MCF 10A (cell line): ENCODE measurements at regions of chr6 and their contacts with region 1.

Region 1: GRCh38 chr6:73695619-73696421 is at the start of gene CD109:
- DNase-seq: peak; percentile 85
- H3K4me3 Mint-ChIP-seq: peak within 1 kb of the TSS; percentile 93
- H3K27ac Mint-ChIP-seq: peak within 1 kb of the TSS; percentile 93
- H3K4me1 Mint-ChIP-seq: peaks cover 55% of the 10 kb centered on the region
- H3K27me3 Mint-ChIP-seq: no peaks in the 10 kb centered on the region
- CTCF ChIP-seq: no peak
- total RNA-seq, gene CD109: 91.0 and 94.5 TPM in 2 replicates

Region 2: GRCh38 chr6:73710470-73710869 is 14.7 kb after region 1 on chr6:
- CTCF ChIA-PET with region 1: interaction called, 4 read pairs
- POLR2A ChIA-PET with region 1: interaction called, 10 read pairs
- intact Hi-C with region 1: no loop called
- DNase-seq: peak; percentile 94
- H3K4me3 Mint-ChIP-seq: no peak overlapping the region
- H3K27ac Mint-ChIP-seq: peak overlapping the region; percentile 1
- H3K4me1 Mint-ChIP-seq: peaks cover 13% of the 10 kb centered on the region
- H3K27me3 Mint-ChIP-seq: no peaks in the 10 kb centered on the region
- CTCF ChIP-seq: no peak